ENCODE measurements at regions of chr15 and their contacts with region 1.

Region 1: DNA sequence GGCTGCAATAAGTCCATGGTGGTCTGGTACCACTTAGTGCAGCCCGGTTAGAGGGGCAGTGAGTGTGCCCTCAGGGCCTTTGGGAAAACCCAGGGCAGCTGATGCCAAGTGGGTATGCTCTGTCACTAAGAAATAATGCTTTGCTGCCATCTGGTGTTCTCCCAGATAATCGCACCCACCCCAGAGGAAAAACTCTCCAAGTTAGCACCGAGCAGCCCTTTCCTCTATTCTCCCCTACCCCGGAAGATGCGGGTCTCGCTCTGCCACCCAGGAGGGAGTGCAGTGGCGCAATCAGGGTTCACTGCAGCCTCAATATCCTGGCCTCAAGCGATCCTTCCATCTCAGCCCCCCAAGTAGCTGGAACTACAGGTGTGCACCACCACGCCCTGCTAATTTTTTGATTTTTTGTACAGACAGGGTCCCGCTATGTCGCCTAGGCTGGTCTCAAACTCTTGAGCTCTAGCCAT is 21.3 kb upstream of the DAPK2 start:
- DNase-seq: peak; percentile 67
- H3K4me3 Mint-ChIP-seq: no peak overlapping the region
- H3K27ac Mint-ChIP-seq: no peak overlapping the region
- H3K4me1 Mint-ChIP-seq: peaks cover 7% of the 10 kb centered on the region
- H3K27me3 Mint-ChIP-seq: no peaks in the 10 kb centered on the region
- CTCF ChIP-seq: peak; percentile 75

Region 2: DNA sequence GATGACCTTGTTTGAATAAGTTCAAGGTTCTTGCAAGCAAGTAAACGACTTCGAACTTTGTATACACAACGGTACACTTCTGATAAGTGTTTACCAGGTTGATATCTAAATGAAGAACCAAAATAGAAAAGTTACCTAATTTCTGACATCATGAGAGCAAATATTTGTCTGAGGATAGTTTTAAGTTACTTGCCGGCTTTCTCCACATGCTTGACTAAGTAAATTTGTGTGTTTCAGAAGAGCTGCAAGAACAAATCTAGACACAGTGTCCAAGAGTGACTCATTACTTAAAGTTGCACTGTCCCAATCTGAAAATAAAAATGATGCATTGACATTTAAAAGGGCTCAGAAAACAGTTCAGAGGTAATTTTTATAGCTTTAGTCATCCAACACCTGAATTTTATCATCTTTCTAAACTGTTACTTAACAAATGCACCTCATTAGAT is 349.0 kb before region 1 on chr15:
- CTCF ChIA-PET with region 1: interaction called, 17 read pairs
- POLR2A ChIA-PET with region 1: interaction called, 7 read pairs
- intact Hi-C with region 1: no loop called
- DNase-seq: peak; percentile 56
- H3K4me3 Mint-ChIP-seq: peak overlapping the region; percentile 26
- H3K27ac Mint-ChIP-seq: peak overlapping the region; percentile 75
- H3K4me1 Mint-ChIP-seq: peaks cover 27% of the 10 kb centered on the region
- H3K27me3 Mint-ChIP-seq: no peaks in the 10 kb centered on the region
- CTCF ChIP-seq: no peak

Region 3: DNA sequence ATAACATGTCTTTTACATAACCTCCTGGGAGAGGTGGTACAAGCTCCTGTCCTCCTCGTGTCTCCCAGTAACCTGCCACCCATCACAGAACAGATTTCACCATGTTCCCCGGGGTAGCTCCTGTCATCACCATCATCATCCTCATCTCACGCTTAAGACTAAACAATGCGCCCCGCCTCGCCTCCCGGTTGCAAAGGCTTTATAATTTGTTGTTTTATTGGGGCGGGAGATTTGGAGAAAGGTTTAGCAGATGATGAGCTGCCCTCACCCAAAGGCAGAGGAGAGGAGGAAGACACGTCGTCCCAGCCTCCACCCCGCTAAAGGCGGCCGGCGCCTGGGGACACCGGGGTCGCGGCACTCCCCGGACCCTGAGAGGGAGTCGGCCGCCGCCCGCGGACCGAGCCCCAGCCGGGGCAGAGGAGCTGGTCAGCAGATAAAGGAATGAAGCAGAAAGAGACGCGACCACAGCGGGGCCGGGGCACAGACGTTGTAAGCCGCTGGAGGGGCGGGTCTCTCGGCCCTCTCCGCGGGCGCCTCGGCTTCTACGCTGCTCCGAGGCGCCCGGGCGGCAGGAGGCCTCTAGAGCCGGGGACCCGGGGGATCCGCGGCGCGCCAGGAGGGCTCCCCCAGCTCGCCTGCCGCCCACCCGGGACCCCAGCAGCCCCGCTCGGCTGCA is 234.4 kb before region 1 on chr15:
- CTCF ChIA-PET with region 1: interaction called, 3 read pairs
- POLR2A ChIA-PET with region 1: interaction called, 5 read pairs
- intact Hi-C with region 1: loop called (anchors 5 kb)
- DNase-seq: peak; percentile 33
- H3K4me3 Mint-ChIP-seq: peak overlapping the region; percentile 99
- H3K27ac Mint-ChIP-seq: peak overlapping the region; percentile 99
- H3K4me1 Mint-ChIP-seq: peaks cover 24% of the 10 kb centered on the region
- H3K27me3 Mint-ChIP-seq: peaks cover 17% of the 10 kb centered on the region
- CTCF ChIP-seq: no peak

Region 4: DNA sequence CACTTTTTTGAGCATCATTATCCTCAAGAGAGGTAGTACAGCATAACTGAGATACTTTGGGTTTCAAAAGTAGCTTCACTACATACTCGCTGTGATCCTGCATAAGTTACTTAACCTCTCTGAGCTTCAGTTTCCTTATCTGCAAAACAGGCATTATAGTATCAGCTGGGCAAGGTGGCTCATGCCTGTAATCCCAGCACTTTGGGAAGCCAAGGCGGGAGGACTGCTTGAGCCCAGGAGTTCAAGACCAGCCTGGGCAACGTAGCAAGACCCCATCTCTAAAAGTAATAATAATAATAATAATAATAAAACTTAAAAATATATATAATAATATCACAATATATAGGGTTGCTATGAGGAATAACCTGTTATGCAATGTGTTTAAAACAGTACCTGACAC is 15.2 kb after region 1 on chr15:
- CTCF ChIA-PET with region 1: interaction called, 16 read pairs
- POLR2A ChIA-PET with region 1: interaction called, 5 read pairs
- intact Hi-C with region 1: no loop called
- DNase-seq: no peak
- H3K4me3 Mint-ChIP-seq: no peak overlapping the region
- H3K27ac Mint-ChIP-seq: no peak overlapping the region
- H3K4me1 Mint-ChIP-seq: no peaks in the 10 kb centered on the region
- H3K27me3 Mint-ChIP-seq: no peaks in the 10 kb centered on the region
- CTCF ChIP-seq: no peak

Region 5: DNA sequence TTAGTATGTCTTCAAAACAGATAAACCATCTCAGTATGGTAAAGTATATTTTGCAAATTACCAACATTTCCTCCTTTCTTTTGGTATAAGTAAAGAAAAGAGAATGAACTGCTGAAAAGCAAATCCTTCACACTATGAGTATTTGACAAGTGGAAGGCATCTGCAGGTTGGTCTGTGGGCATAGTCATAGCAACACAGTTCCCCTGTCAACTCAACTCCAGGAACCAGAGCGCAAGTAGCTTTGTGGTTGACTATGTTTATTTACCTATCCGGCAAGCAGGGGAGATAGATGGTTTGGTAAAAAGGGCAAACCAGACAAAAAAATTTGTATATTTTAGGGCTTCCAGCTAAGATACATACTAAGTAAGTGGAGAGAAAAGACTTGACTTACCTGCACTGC is 183.5 kb after region 1 on chr15:
- CTCF ChIA-PET with region 1: no interaction called
- POLR2A ChIA-PET with region 1: no interaction called
- intact Hi-C with region 1: no loop called
- DNase-seq: no peak
- H3K4me3 Mint-ChIP-seq: no peak overlapping the region
- H3K27ac Mint-ChIP-seq: no peak overlapping the region
- H3K4me1 Mint-ChIP-seq: peaks cover 28% of the 10 kb centered on the region
- H3K27me3 Mint-ChIP-seq: no peaks in the 10 kb centered on the region
- CTCF ChIP-seq: no peak